ENCODE measurements at regions of chrX and their contacts with region 1.

Region 1: DNA sequence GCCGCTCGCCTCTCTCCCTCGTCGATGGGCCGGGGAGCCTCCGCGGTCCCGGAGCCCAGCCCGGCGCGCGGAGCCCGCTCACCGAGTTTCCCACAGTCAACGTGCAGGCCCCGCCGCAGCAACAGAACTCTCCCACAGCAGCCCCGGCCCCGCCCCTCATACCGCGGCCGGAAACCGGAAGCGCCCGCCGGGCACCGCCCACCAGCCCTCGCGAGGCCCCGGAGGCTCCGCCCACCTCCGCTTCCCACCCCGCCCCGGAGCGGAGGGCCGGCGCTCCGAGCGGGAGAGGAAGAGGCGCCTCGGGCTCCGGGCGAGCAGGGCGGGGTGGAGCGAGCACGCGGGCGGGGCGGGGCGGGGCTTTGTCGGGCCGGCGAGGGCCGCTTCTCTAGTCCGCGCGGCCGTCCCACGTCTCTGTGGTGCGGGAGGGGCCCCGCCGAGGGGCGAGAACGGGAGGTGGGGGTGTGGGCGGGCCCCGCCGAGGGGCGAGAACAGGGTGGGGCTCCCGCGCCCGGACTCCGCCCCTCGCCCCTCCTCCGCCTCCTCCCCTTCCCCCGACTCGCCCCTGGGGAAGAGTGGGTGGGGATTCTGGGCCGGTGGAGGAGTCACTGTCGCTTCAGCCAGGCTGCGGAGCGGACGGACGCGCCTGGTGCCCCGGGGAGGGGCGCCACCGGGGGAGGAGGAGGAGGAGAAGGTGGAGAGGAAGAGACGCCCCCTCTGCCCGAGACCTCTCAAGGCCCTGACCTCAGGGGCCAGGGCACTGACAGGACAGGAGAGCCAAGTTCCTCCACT is at the starts of genes ABCD1 and BCAP31:
- DNase-seq: peak; percentile 86 to 92 (median 91)
- H3K4me3 ChIP-seq: peak within 1 kb of the TSS; percentile 17 to 63
- H3K4me3 Mint-ChIP-seq: peak within 1 kb of the TSS; percentile 84 to 89 (median 87)
- H3K27ac ChIP-seq: peak within 1 kb of the TSS; percentile 71
- H3K27ac Mint-ChIP-seq: peak within 1 kb of the TSS; percentile 81 to 88 (median 85)
- H3K4me1 ChIP-seq: peaks cover 42% of the 10 kb centered on the region
- H3K4me1 Mint-ChIP-seq: peaks cover 12 to 38% (median 22%) of the 10 kb centered on the region in 4 donors
- H3K27me3 ChIP-seq: no peaks in the 10 kb centered on the region
- H3K27me3 Mint-ChIP-seq: no peaks in the 10 kb centered on the region
- total RNA-seq, gene ABCD1: 6.7 to 6.8 TPM
- total RNA-seq, gene BCAP31: 126 to 128 TPM

Region 2: DNA sequence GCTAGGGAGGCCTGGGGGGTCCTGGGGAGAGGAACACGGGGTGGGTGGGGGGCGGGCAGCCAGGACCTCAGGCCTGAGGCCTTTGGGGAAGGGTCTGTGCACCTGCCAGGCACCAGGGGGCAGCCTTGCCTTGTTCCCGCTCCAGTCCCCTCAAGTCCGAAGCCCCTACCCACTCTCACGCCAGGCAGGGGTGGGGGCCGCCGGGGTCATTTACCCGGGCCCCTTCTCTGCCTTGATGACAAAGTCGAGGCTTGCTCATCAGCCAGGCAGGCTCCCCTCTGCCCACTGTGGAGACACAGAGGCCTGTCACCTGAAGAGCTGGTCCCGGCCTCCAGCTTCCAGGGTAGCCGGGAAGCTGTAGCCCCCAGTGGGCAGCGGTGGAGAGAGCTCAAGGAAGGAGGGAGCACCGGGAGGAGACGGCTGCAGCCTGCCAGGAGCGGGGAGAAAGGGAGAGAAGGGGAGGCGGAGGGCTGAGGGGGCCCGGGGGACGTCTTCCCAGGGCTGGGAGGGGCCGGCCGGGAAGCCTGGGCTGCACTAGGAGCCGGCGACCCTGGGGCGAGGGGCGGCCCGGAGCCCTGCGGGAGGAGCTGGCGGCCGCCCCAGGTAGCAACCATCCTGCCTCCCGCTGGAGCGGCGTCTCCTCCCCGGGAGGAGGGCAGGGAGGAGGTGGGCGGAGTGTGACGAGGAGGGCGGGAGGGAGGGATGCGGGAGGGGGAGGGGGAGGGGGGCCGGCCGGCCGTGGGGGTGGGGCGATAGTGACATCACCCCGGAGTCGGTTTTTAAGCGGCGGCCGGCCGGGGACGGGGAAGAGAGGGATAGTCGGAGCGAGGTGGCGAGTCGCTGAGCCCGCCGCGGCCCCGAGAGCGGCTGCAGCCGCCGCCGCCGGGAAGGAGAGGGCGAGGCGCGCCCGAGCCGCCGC is 37.1 kb before region 1 on chrX and contains the start of gene SLC6A8:
- CTCF ChIA-PET with region 1: no interaction called
- POLR2A ChIA-PET with region 1: interaction called, 3 read pairs
- intact Hi-C with region 1: loop called (anchors 5 kb)
- DNase-seq: peak in 3 of 5 donors; percentile 10 to 44 (median 23)
- H3K4me3 ChIP-seq: no peak within 1 kb of the TSS
- H3K4me3 Mint-ChIP-seq: peak within 1 kb of the TSS; percentile 63 to 88 (median 76)
- H3K27ac ChIP-seq: no peak within 1 kb of the TSS
- H3K27ac Mint-ChIP-seq: no peak within 1 kb of the TSS
- H3K4me1 ChIP-seq: no peaks in the 10 kb centered on the region
- H3K4me1 Mint-ChIP-seq: no peaks in the 10 kb centered on the region
- H3K27me3 ChIP-seq: no peaks in the 10 kb centered on the region
- H3K27me3 Mint-ChIP-seq: no peaks in the 10 kb centered on the region
- total RNA-seq, gene SLC6A8: 0.84 to 1.4 TPM

Region 3: GRCh38 chrX:153744214-153744724 is 19.8 kb after region 1 on chrX:
- CTCF ChIA-PET with region 1: no interaction called
- POLR2A ChIA-PET with region 1: no interaction called
- intact Hi-C with region 1: no loop called
- DNase-seq: peak in 1 of 5 donors; percentile 23
- H3K4me3 ChIP-seq: no peak overlapping the region
- H3K4me3 Mint-ChIP-seq: peak overlapping the region in 1 of 8 donors; percentile 62
- H3K27ac ChIP-seq: no peak overlapping the region
- H3K27ac Mint-ChIP-seq: no peak overlapping the region
- H3K4me1 ChIP-seq: peaks cover 16% of the 10 kb centered on the region
- H3K4me1 Mint-ChIP-seq: peaks cover 6 to 20% (median 12%) of the 10 kb centered on the region in 4 donors
- H3K27me3 ChIP-seq: no peaks in the 10 kb centered on the region
- H3K27me3 Mint-ChIP-seq: peaks cover 0 to 1% of the 10 kb centered on the region in 2 donors

Region 4: GRCh38 chrX:153794018-153794896 is 69.8 kb after region 1 on chrX and contains the starts of genes IDH3G and SSR4:
- CTCF ChIA-PET with region 1: no interaction called
- POLR2A ChIA-PET with region 1: no interaction called
- intact Hi-C with region 1: loop called (anchors 1 kb)
- DNase-seq: peak; percentile 93 to 95 (median 94)
- H3K4me3 ChIP-seq: peak within 1 kb of the TSS; percentile 63 to 69
- H3K4me3 Mint-ChIP-seq: peak within 1 kb of the TSS; percentile 89 to 95 (median 92)
- H3K27ac ChIP-seq: peak within 1 kb of the TSS; percentile 85
- H3K27ac Mint-ChIP-seq: peak within 1 kb of the TSS; percentile 90 to 95 (median 92)
- H3K4me1 ChIP-seq: peaks cover 43% of the 10 kb centered on the region
- H3K4me1 Mint-ChIP-seq: peaks cover 12 to 30% (median 21%) of the 10 kb centered on the region in 4 donors
- H3K27me3 ChIP-seq: no peaks in the 10 kb centered on the region
- H3K27me3 Mint-ChIP-seq: no peaks in the 10 kb centered on the region
- total RNA-seq, gene IDH3G: 39.9 to 45.5 TPM
- total RNA-seq, gene SSR4: 216 to 224 TPM

Measured in CD4-positive, alpha-beta memory T cell (primary cell).